ENCODE measurements at regions of chr17 and their contacts with region 1.

Region 1: GRCh38 chr17:57685505-57686132 is 59.5 kb downstream of the CCDC182 start:
- DNase-seq: no peak
- H3K4me3 ChIP-seq: no peak overlapping the region
- H3K27ac ChIP-seq: no peak overlapping the region
- H3K4me1 ChIP-seq: no peaks in the 10 kb centered on the region
- H3K27me3 ChIP-seq: no peaks in the 10 kb centered on the region
- CTCF ChIP-seq: no peak
- POLR2A ChIP-seq: no peak

Region 2: DNA sequence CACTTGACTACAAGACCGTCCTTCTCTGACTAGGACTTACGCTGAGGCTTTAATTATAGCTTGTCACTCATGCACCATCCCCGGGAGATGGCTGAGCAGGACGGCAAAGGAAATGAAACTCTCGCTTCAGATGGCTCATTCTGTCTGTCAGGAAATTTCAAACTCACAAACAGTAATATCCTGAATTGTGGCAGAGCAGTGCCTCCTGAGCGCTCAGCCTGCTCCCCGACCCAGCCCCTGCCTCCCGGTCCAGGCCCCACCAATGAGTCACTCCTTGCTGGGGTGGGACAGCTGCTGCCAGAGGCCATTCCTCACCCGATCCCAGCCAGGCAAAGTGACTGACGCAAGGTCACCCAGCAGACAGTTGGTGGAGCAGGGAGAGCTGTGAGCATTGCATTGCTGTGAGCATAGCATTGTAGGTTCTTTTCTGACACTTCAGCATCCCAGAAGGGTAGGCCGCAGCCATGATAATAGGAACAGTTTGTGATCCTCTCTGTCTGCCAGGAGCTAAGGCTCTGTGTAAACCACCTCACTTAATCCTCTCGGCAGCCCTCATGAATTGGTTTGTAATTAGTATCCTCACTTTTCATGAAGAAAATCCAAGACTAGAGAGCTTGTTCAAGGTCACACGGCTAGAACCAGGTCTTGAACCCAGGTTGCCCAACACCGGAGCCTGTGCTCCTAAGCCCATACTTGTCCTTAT is 38.6 kb after region 1 on chr17:
- intact Hi-C with region 1: loop called in 1 of 2 experiments (anchors 5 kb)
- DNase-seq: peak in 4 of 7 donors; percentile 34 to 60 (median 48)
- H3K4me3 ChIP-seq: no peak overlapping the region
- H3K27ac ChIP-seq: no peak overlapping the region
- H3K4me1 ChIP-seq: peaks cover 0 to 12% of the 10 kb centered on the region in 2 donors
- H3K27me3 ChIP-seq: no peaks in the 10 kb centered on the region
- CTCF ChIP-seq: no peak
- POLR2A ChIP-seq: no peak